ENCODE measurements at regions of chr1 and their contacts with region 1.

Region 1: DNA sequence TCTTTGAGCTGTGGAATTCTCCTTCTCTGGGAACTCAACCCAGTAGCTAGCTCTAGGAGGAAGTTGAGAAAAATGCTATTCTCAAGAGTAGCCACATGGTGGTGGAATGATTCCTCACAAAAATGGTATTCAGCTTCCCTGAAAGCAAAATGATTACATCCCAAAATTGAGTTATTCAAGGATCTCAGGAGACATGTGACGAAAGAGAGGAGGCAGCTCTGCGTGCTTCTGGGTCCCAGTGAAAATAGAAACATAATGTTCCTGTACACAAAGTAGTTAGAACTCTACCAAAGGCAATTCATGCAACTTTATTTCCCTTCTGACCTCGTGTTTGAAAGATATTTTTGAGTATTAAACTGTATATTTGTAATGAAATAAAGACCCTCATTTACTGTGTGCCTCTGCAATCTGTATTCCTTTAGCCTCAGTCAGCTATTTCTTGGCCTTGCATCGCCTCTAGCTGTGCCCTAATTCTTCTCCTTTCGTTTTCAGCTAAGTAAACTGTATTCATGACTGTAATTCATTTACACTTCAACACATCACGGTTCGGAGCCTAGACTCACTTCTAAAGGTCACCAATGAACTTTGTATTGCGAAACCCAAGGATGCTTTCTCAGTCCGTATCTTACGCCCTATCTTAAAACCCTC is 167.3 kb downstream of the FASLG start:
- DNase-seq: no peak
- ATAC-seq: peak; percentile 65
- H3K4me3 ChIP-seq: no peak overlapping the region
- H3K27ac ChIP-seq: no peak overlapping the region
- H3K4me1 ChIP-seq: peaks cover 4% of the 10 kb centered on the region; the same call in 1 of the 2 replicates
- H3K27me3 ChIP-seq: no peaks in the 10 kb centered on the region
- CTCF ChIP-seq: peak; percentile 47 to 61 (median 51); a peak in 5 of 6 replicates
- EP300 ChIP-seq: no peak
- POLR2A ChIP-seq: no peak
- RAD21 ChIP-seq: peak; percentile 81

Region 2: GRCh38 chr1:172837816-172838680 is 11.8 kb after region 1 on chr1:
- CTCF ChIA-PET with region 1: interaction called, 17 read pairs
- POLR2A ChIA-PET with region 1: no interaction called
- RAD21 ChIA-PET with region 1: interaction called, 4 read pairs
- SMC1A ChIA-PET with region 1: interaction called, 5 read pairs
- in situ Hi-C with region 1: no loop called
- intact Hi-C with region 1: no loop called
- DNase-seq: no peak
- ATAC-seq: peak; percentile 64
- H3K4me3 ChIP-seq: no peak overlapping the region
- H3K27ac ChIP-seq: no peak overlapping the region
- H3K4me1 ChIP-seq: no peaks in the 10 kb centered on the region
- H3K27me3 ChIP-seq: peaks cover 0 to 2% of the 10 kb centered on the region in 2 experiments; a peak in 3 of 4 replicates
- CTCF ChIP-seq: no peak
- EP300 ChIP-seq: no peak
- POLR2A ChIP-seq: no peak
- RAD21 ChIP-seq: no peak

Region 3: GRCh38 chr1:173020138-173020750 is 194.0 kb after region 1 on chr1:
- CTCF ChIA-PET with region 1: interaction called, 21 read pairs
- POLR2A ChIA-PET with region 1: no interaction called
- RAD21 ChIA-PET with region 1: interaction called, 10 read pairs
- SMC1A ChIA-PET with region 1: interaction called, 19 read pairs
- in situ Hi-C with region 1: no loop called
- intact Hi-C with region 1: no loop called
- DNase-seq: peak; percentile 66
- ATAC-seq: peak; percentile 96
- H3K4me3 ChIP-seq: no peak overlapping the region
- H3K27ac ChIP-seq: peak overlapping the region; percentile 76
- H3K4me1 ChIP-seq: peaks cover 12% of the 10 kb centered on the region
- H3K27me3 ChIP-seq: no peaks in the 10 kb centered on the region
- CTCF ChIP-seq: no peak
- EP300 ChIP-seq: peak; percentile 47 to 62; a peak in 2 of 4 replicates
- POLR2A ChIP-seq: no peak
- RAD21 ChIP-seq: no peak

Region 4: DNA sequence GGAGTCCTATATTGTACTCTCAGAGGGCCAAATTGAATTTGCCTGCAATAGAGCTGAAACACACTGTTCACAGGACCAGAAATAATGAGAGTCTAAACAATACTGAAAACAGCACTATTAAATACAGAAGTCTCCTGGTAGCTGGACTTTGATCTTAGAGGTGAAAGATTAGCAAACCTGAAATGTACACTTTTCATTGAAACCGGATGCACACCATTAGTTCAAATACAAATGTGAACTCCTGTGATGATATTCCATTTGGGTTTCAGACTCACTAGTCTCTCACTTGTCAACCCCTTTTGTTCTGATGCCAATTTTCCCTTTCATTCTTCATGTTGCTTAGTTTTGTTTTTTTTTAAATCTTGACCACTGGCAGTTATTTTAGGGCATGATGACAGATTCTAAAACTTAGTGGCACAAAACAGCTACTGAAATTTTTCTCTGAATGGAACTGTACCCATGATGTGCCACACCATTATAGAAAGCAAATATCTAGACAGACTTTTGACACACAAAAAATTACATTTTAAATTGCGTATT is 386.8 kb after region 1 on chr1:
- CTCF ChIA-PET with region 1: interaction called, 17 read pairs
- POLR2A ChIA-PET with region 1: no interaction called
- RAD21 ChIA-PET with region 1: interaction called, 7 read pairs
- SMC1A ChIA-PET with region 1: interaction called, 20 read pairs
- in situ Hi-C with region 1: no loop called
- intact Hi-C with region 1: no loop called
- DNase-seq: peak; percentile 90
- ATAC-seq: peak; percentile 91
- H3K4me3 ChIP-seq: no peak overlapping the region
- H3K27ac ChIP-seq: no peak overlapping the region
- H3K4me1 ChIP-seq: peaks cover 5% of the 10 kb centered on the region
- H3K27me3 ChIP-seq: no peaks in the 10 kb centered on the region
- CTCF ChIP-seq: no peak
- EP300 ChIP-seq: peak; percentile 58 to 92; a peak in 3 of 4 replicates
- POLR2A ChIP-seq: no peak
- RAD21 ChIP-seq: 0 out of 2 replicates have a peak, but pooled peaks have one; percentile 13